Head of caudate nucleus (tissue), 42 donors: ENCODE measurements at regions of chr19 and their contacts with region 1.

Region 1: GRCh38 chr19:38229585-38230073 is 5.6 kb upstream of the DPF1 start:
- DNase-seq: peak; percentile 88 to 99 (median 96)

Region 2: DNA sequence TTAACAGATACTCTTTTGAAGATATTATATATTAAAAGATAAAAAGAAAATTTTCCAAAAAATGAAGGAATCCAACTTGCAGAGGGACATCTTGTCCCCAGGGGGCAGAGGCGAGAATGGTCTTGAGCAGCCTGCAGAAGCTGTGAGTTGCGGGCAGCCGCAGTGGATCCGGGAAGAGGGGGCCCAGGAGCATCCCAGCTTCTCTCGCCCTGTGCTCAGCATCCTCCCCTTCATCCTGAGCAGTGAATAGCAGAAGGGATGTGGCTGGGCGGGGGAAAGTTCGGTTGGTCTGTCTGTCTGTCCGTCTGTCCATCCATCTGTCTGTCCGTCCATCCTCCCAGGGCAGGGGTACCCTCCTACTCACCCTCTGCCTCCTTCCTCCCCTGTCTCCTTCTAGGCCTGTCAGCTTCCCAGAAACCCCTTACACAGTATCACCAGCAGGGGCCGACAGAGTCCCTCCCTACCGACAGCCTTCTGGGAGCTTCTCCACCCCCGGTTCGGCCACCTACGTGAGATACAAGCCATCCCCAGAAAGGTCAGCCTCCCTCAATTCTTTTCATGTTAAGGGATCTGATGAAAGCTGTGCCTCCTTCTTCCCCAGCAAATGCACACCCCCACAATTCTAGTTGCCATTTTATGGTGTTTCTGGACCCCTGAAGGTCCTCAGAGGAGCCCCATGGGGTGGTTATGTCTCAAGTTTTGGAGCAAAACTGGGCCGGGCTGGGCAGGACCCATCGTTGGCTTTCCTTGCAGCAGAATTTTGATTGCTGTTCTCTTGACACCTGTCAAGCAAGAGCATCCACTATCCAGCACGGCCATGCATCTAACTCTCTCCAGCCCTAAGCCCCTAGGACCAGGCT is 87.2 kb before region 1 on chr19:
- intact Hi-C with region 1: loop called (anchors 5 kb)
- DNase-seq: peak; percentile 68 to 95 (median 85)